ENCODE measurements at regions of chr3 and their contacts with region 1.

Region 1: DNA sequence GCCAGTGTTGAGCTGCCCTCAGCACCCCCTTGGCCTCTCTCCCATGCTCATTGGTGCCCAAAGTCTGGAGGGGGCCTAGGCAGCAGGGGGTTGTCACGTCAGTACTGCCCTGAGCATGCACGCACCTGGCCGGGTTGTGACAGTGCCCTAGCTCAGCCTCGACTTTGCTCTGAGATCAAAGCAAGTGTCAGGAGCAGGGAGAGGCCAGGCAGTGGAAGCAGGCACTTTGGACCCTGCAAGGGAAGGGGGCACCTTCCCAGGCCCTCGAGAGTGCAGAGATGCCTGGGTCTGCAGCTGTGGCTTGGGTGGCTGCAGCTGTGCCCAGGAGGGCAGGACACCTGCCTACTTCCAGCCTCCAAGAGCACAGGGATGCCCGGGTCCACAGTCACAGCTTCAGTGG is 561.3 kb downstream of the NLGN1 start:
- DNase-seq: no peak
- H3K4me3 ChIP-seq: no peak overlapping the region; a peak in 1 of 8 replicates
- H3K27ac ChIP-seq: no peak overlapping the region
- H3K4me1 ChIP-seq: peaks cover 0 to 5% (median 0%) of the 10 kb centered on the region in 4 experiments; a peak in 1 of 7 replicates
- H3K27me3 ChIP-seq: no peaks in the 10 kb centered on the region
- CTCF ChIP-seq: no peak
- EP300 ChIP-seq: no peak
- POLR2A ChIP-seq: no peak
- RAD21 ChIP-seq: no peak

Region 2: GRCh38 chr3:173993299-173993698 is 34.5 kb after region 1 on chr3:
- CTCF ChIA-PET with region 1: interaction called, 12 read pairs
- POLR2A ChIA-PET with region 1: no interaction called
- DNase-seq: no peak
- H3K4me3 ChIP-seq: no peak overlapping the region
- H3K27ac ChIP-seq: no peak overlapping the region
- H3K4me1 ChIP-seq: no peaks in the 10 kb centered on the region
- H3K27me3 ChIP-seq: no peaks in the 10 kb centered on the region
- CTCF ChIP-seq: peak in 2 of 3 experiments; percentile 16 to 57; a peak in 2 of 4 replicates
- EP300 ChIP-seq: no peak
- POLR2A ChIP-seq: no peak
- RAD21 ChIP-seq: peak; percentile 54